ENCODE measurements at regions of chr17 and their contacts with region 1.

Region 1: DNA sequence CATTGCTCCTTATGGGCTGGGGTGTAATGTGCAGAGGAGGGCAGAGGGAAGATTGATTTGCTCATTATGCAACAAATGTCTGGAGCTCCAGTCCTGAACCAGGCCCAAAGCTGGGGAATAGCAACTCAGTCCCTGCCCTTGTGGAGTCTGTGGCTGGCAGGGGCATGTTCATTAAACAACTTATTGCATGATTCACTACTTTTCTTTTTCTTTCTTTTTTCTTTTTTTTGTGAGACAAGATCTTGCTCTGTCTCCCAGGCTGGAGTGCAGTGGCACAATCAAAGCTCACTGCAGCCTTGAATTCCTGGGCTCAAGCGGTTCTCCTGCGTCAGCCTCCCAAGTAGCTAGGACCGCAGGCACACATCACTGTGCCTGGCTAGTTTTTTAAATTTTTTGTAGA is 23.1 kb downstream of the MSI2 start:
- DNase-seq: no peak
- H3K4me3 ChIP-seq: no peak overlapping the region
- H3K27ac ChIP-seq: no peak overlapping the region
- H3K4me1 ChIP-seq: peaks cover 13% of the 10 kb centered on the region
- H3K27me3 ChIP-seq: no peaks in the 10 kb centered on the region
- CTCF ChIP-seq: no peak
- EP300 ChIP-seq: no peak
- POLR2A ChIP-seq: no peak

Region 2: DNA sequence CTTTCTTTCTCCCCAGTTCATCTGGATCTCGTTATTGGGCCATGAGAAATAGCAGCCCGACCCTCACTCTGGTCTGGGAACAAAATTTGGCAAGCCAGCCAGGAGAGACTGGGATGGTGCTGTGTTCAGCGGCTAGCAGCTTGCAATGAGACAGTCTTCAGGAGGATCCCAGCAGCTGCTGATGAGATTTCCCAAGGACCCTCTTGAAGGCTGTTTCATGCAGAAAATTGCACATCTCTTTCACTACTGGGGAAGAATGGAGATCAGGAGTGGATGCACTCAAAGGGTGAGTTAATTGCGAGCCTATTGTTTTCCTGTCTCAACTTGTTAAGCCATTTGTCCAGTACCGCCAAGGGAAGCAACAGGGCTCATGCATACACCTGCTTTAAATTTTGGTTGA is 313.1 kb before region 1 on chr17:
- intact Hi-C with region 1: no loop called
- DNase-seq: no peak
- H3K4me3 ChIP-seq: no peak overlapping the region
- H3K27ac ChIP-seq: no peak overlapping the region
- H3K4me1 ChIP-seq: no peaks in the 10 kb centered on the region
- H3K27me3 ChIP-seq: no peaks in the 10 kb centered on the region
- CTCF ChIP-seq: no peak
- EP300 ChIP-seq: no peak
- POLR2A ChIP-seq: no peak

Region 3: DNA sequence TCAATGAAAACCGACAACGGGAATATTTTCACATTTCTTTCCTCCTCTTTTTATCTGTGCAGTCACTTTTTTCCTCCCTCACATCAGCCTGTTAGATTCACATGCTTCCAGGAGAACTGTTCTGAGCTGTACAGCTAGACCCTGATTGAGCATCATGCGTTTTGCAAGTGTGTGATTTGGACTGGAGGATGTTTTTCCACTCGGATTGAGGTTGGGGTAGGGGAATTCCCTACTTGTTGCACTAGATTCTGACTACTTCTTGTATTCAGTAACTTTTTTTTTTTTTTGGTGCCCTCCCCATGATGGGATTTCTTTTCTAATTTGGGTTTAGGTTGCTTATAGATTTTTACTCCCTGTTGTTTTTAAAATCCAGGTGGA is 18.4 kb before region 1 on chr17:
- intact Hi-C with region 1: loop called in 1 of 4 experiments (anchors 2 kb)
- DNase-seq: no peak
- H3K4me3 ChIP-seq: no peak overlapping the region
- H3K27ac ChIP-seq: no peak overlapping the region
- H3K4me1 ChIP-seq: peaks cover 12% of the 10 kb centered on the region
- H3K27me3 ChIP-seq: no peaks in the 10 kb centered on the region
- CTCF ChIP-seq: no peak
- EP300 ChIP-seq: no peak
- POLR2A ChIP-seq: no peak

Region 4: GRCh38 chr17:57305903-57306504 is 26.6 kb after region 1 on chr17:
- intact Hi-C with region 1: no loop called
- DNase-seq: no peak
- H3K4me3 ChIP-seq: no peak overlapping the region
- H3K27ac ChIP-seq: no peak overlapping the region
- H3K4me1 ChIP-seq: peaks cover 12% of the 10 kb centered on the region
- H3K27me3 ChIP-seq: no peaks in the 10 kb centered on the region
- CTCF ChIP-seq: no peak
- EP300 ChIP-seq: no peak
- POLR2A ChIP-seq: no peak

Measured in ovary (tissue), 10 donors.